Psoas muscle (tissue), 8 donors: ENCODE measurements at regions of chr7 and their contacts with region 1.

Region 1: DNA sequence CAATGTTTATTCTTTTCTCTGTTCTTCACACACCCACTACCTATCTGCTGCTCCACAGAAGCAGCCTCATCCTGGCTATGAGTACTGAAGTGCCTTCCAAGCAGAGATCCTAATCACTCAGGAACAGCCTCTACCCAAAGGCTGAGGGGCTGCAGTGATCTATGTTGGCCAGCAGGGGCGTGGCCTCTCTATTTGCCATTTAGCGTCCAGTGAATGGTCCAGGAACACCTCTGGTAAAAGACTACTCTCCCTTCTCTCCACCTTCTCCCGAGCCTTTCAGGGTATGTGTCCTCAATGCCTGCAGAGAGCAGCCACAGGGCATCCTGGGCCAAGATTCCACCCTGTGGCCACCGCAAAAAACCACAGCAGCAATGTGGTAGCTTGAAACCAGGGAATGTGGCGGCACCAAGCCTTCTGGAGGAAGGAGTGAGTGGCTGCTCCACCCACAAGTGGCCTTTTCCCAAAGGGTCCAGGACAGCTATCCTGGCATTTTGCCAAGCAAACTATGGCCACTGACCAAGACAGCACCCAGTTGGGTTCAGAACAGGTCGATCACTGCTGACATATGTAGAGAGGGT is 70.9 kb downstream of the SYPL1 start:
- DNase-seq: no peak
- ATAC-seq: peak in 3 of 4 donors; percentile 51 to 65 (median 61)
- H3K4me3 ChIP-seq: no peak overlapping the region
- H3K27ac ChIP-seq: no peak overlapping the region
- H3K4me1 ChIP-seq: peaks cover 10% of the 10 kb centered on the region
- H3K27me3 ChIP-seq: no peaks in the 10 kb centered on the region
- CTCF ChIP-seq: peak; percentile 62

Region 2: GRCh38 chr7:105934572-105935185 is 106.5 kb before region 1 on chr7:
- intact Hi-C with region 1: loop called in 1 of 2 experiments (anchors 5 kb)
- DNase-seq: no peak
- ATAC-seq: peak in 3 of 4 donors; percentile 27 to 69 (median 60)
- H3K4me3 ChIP-seq: no peak overlapping the region
- H3K27ac ChIP-seq: no peak overlapping the region
- H3K4me1 ChIP-seq: no peaks in the 10 kb centered on the region
- H3K27me3 ChIP-seq: no peaks in the 10 kb centered on the region
- CTCF ChIP-seq: no peak